ENCODE measurements at regions of chr15 and their contacts with region 1.

Region 1: GRCh38 chr15:40108855-40109735 is at the start of gene BMF:
- DNase-seq: peak; percentile 100
- H3K4me3 ChIP-seq: peak within 1 kb of the TSS; percentile 80 to 99 (median 81)
- H3K27ac ChIP-seq: peak within 1 kb of the TSS; percentile 88 to 92 (median 89)
- H3K4me1 ChIP-seq: peaks cover 42 to 44% of the 10 kb centered on the region in 2 donors
- H3K27me3 ChIP-seq: no peaks in the 10 kb centered on the region
- CTCF ChIP-seq: peak in 4 of 6 experiments; percentile 17 to 51 (median 38)
- POLR2A ChIP-seq: peak in 1 of 2 donors; percentile 96
- total RNA-seq, gene BMF: 31.9 to 49.3 (median 37.2) TPM

Region 2: DNA sequence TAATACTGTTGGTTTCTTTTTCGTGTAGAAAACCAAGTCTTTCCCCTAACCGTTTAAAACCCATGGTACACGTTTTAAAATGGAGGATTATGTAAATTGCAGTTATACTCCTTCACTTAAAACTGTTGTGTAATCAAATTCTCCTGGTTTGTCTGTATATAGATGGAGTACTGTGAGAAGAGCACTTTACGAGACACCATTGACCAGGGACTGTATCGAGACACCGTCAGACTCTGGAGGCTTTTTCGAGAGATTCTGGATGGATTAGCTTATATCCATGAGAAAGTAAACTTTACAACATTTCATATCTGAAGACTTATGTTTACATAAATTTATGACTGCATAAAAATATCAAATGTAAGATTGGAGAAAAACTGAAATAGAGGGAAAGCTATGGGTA is 121.3 kb before region 1 on chr15:
- intact Hi-C with region 1: no loop called
- DNase-seq: no peak
- H3K4me3 ChIP-seq: no peak overlapping the region
- H3K27ac ChIP-seq: no peak overlapping the region
- H3K4me1 ChIP-seq: no peaks in the 10 kb centered on the region
- H3K27me3 ChIP-seq: no peaks in the 10 kb centered on the region
- CTCF ChIP-seq: no peak
- POLR2A ChIP-seq: no peak

Region 3: GRCh38 chr15:40044717-40045571 is 64.2 kb before region 1 on chr15:
- intact Hi-C with region 1: loop called (anchors 5 kb)
- DNase-seq: peak; percentile 95
- H3K4me3 ChIP-seq: no peak overlapping the region
- H3K27ac ChIP-seq: peak overlapping the region; percentile 79 to 84 (median 81)
- H3K4me1 ChIP-seq: peaks cover 33 to 65% of the 10 kb centered on the region in 2 donors
- H3K27me3 ChIP-seq: no peaks in the 10 kb centered on the region
- CTCF ChIP-seq: peak; percentile 53 to 99 (median 96)
- POLR2A ChIP-seq: no peak

Region 4: GRCh38 chr15:40160689-40161688 is 51.9 kb after region 1 on chr15 and contains the start of gene BUB1B:
- intact Hi-C with region 1: loop called (anchors 5 kb)
- DNase-seq: peak; percentile 89 to 90
- H3K4me3 ChIP-seq: peak within 1 kb of the TSS in 2 of 3 donors; percentile 11 to 35
- H3K27ac ChIP-seq: no peak within 1 kb of the TSS
- H3K4me1 ChIP-seq: peaks cover 3 to 10% of the 10 kb centered on the region in 2 donors
- H3K27me3 ChIP-seq: no peaks in the 10 kb centered on the region
- CTCF ChIP-seq: no peak
- POLR2A ChIP-seq: no peak
- total RNA-seq, gene BUB1B: 0.20 to 3.7 (median 1.4) TPM